Left colon (tissue), 2 donors: ENCODE measurements at regions of chr3 and their contacts with region 1.

Region 1: GRCh38 chr3:79521238-79521848 is 246.5 kb downstream of the ROBO1 start:
- DNase-seq: no peak
- ATAC-seq: no peak

Region 2: GRCh38 chr3:79383402-79384012 is 137.8 kb before region 1 on chr3:
- intact Hi-C with region 1: no loop called
- DNase-seq: no peak
- ATAC-seq: no peak

Region 3: GRCh38 chr3:80677796-80678195 is 1156.5 kb after region 1 on chr3:
- intact Hi-C with region 1: loop called in 1 of 2 experiments (anchors 10 kb)
- DNase-seq: no peak
- ATAC-seq: no peak